Activated CD8-positive, alpha-beta T cell treated with anti-CD3 and anti-CD28 coated beads for 36 hours (primary cell): ENCODE measurements at regions of chr2 and their contacts with region 1.

Region 1: DNA sequence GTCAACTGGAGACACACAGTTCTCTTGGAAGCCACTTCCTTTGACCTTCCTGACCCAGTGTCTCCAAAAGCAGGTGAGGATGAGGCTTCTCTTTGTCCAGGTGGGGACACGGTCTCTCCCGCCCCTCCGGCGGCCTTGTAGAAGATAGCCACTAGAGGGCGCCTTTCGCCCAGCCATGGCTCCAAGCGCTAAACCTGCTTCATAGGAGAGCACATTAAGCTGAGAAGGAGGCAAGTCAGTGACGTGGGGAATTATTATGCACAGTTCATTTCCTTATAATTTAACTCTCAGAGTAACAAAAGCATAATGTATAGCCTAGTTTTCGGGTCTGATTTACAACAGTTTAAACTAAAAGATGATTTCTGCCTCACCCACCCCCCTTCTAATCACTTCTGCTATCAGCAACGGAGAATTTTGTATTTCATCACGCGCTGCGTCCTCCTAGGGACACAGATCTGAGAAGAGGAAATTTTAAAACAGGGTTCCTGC is 208.7 kb downstream of the ICOS start:
- DNase-seq: peak; percentile 88
- ATAC-seq: peak; percentile 98
- H3K4me3 Mint-ChIP-seq: peak overlapping the region; percentile 70
- H3K27ac Mint-ChIP-seq: peak overlapping the region; percentile 58
- H3K4me1 Mint-ChIP-seq: peaks cover 5% of the 10 kb centered on the region
- H3K27me3 Mint-ChIP-seq: peaks cover 26% of the 10 kb centered on the region
- CTCF ChIP-seq: peak; percentile 90

Region 2: DNA sequence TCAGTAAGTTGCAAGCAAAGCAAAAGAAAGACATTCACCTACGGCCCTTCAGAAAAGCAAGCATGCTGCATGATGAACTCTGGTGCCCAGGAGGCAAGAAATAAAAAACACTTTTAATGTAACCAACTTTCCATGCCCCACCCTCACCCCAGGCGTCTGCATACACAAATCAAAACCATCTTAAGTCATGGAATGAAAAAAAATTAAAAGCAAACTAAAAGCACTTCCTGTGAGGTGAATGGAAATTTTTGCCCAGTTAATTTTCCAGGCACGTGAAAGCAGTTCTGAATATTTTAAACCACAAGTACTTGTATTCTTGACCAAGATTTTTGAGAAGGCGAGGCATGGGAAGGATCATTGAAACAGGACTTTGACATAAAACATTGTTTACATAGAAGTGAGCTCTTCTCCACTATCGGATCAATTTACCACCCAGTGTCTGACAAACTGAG is 211.2 kb before region 1 on chr2:
- CTCF ChIA-PET with region 1: no interaction called
- POLR2A ChIA-PET with region 1: no interaction called
- intact Hi-C with region 1: no loop called
- DNase-seq: peak; percentile 81
- ATAC-seq: peak; percentile 50
- H3K4me3 Mint-ChIP-seq: peak overlapping the region; percentile 60
- H3K27ac Mint-ChIP-seq: peak overlapping the region; percentile 95
- H3K4me1 Mint-ChIP-seq: peaks cover 58% of the 10 kb centered on the region
- H3K27me3 Mint-ChIP-seq: no peaks in the 10 kb centered on the region
- CTCF ChIP-seq: no peak

Region 3: GRCh38 chr2:204078003-204078698 is 67.2 kb before region 1 on chr2:
- CTCF ChIA-PET with region 1: interaction called, 25 read pairs
- POLR2A ChIA-PET with region 1: no interaction called
- intact Hi-C with region 1: no loop called
- DNase-seq: no peak
- ATAC-seq: no peak
- H3K4me3 Mint-ChIP-seq: no peak overlapping the region
- H3K27ac Mint-ChIP-seq: no peak overlapping the region
- H3K4me1 Mint-ChIP-seq: peaks cover 2% of the 10 kb centered on the region
- H3K27me3 Mint-ChIP-seq: peaks cover 5% of the 10 kb centered on the region
- CTCF ChIP-seq: no peak

Region 4: DNA sequence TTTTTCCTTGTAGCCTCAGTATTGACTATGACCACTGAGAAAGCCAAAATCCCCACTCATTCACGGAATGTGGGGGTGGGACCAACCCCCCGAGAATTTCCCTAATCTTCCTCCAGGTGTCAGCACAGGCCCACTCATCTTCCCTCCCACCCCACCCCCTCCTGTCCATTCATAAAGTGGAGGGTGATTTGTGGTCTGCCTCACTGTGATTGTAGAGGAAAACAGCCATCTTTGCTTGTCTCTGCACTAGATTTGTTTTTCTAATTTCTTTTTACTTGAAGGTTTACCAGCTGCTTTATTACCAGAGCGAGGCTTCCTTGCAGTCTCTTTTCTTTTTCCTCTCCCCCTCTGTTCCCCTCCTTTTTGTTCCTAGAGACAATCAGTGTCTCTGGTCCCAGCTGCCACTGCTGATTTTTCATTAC is 37.0 kb before region 1 on chr2:
- CTCF ChIA-PET with region 1: interaction called, 9 read pairs
- POLR2A ChIA-PET with region 1: interaction called, 3 read pairs
- intact Hi-C with region 1: loop called (anchors 5 kb)
- DNase-seq: peak; percentile 73
- ATAC-seq: peak; percentile 49
- H3K4me3 Mint-ChIP-seq: peak overlapping the region; percentile 62
- H3K27ac Mint-ChIP-seq: peak overlapping the region; percentile 92
- H3K4me1 Mint-ChIP-seq: peaks cover 78% of the 10 kb centered on the region
- H3K27me3 Mint-ChIP-seq: peaks cover 4% of the 10 kb centered on the region
- CTCF ChIP-seq: peak; percentile 89

Region 5: DNA sequence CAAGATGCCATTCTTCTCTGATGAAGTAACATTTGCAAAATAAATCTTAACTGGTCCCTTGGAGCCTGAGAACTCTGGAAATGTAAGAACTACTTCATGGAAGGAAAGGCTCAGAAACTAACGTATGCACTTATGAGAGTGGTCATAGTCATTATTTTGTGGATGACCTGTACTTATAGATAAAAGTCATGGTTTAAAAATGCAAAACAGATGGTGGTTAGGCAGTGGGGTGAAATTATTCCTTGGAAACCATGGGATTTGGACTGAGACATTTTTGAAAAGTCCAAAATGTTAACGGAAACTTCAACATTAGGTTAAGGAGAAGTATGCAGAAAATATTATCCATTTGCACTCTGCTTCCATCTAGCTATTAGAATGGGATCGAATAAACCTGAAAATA is 14.2 kb after region 1 on chr2:
- CTCF ChIA-PET with region 1: interaction called, 10 read pairs
- POLR2A ChIA-PET with region 1: no interaction called
- intact Hi-C with region 1: no loop called
- DNase-seq: no peak
- ATAC-seq: no peak
- H3K4me3 Mint-ChIP-seq: no peak overlapping the region
- H3K27ac Mint-ChIP-seq: no peak overlapping the region
- H3K4me1 Mint-ChIP-seq: no peaks in the 10 kb centered on the region
- H3K27me3 Mint-ChIP-seq: peaks cover 4% of the 10 kb centered on the region
- CTCF ChIP-seq: no peak

Region 6: GRCh38 chr2:204166961-204167360 is 21.7 kb after region 1 on chr2:
- CTCF ChIA-PET with region 1: interaction called, 12 read pairs
- POLR2A ChIA-PET with region 1: interaction called, 3 read pairs
- intact Hi-C with region 1: no loop called
- DNase-seq: no peak
- ATAC-seq: no peak
- H3K4me3 Mint-ChIP-seq: no peak overlapping the region
- H3K27ac Mint-ChIP-seq: no peak overlapping the region
- H3K4me1 Mint-ChIP-seq: no peaks in the 10 kb centered on the region
- H3K27me3 Mint-ChIP-seq: no peaks in the 10 kb centered on the region
- CTCF ChIP-seq: no peak

Region 7: DNA sequence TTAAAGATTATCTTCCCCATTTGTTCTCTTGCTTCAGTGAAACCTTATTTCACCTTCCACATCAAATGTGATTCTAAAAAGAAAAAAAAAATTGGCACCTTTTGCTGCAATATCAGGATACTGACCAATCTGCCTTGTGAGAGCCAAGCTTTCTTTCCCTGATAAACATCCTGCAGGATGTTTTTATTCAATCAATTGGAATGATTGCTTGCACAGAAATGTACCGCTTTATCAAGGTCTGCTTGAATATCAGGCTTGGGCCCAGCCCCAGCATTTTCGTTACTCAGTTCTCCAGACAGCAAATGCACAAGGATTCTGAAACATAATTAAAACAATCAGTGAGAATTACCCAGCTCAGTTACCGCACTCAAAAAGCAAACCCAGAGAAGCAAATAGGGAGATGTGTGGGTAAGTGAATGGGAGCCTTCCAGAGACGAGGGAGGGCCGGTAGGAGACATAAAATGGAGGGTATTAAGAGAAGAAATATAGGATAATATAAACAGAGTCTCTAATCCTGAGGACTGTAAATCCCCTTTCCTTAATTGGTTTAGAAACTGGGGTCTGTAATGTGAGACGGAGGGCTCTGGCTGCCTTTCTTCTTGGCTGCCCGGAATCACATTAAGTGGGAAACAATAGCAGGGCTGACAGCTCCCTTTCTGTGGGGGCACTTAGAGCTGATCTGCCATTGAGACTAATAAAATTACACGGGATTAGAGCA is 83.0 kb after region 1 on chr2:
- CTCF ChIA-PET with region 1: no interaction called
- POLR2A ChIA-PET with region 1: no interaction called
- intact Hi-C with region 1: no loop called
- DNase-seq: no peak
- ATAC-seq: no peak
- H3K4me3 Mint-ChIP-seq: no peak overlapping the region
- H3K27ac Mint-ChIP-seq: no peak overlapping the region
- H3K4me1 Mint-ChIP-seq: no peaks in the 10 kb centered on the region
- H3K27me3 Mint-ChIP-seq: peaks cover 11% of the 10 kb centered on the region
- CTCF ChIP-seq: no peak

Region 8: GRCh38 chr2:204260162-204260877 is 115.0 kb after region 1 on chr2:
- CTCF ChIA-PET with region 1: interaction called, 11 read pairs
- POLR2A ChIA-PET with region 1: no interaction called
- intact Hi-C with region 1: no loop called
- DNase-seq: peak; percentile 73
- ATAC-seq: peak; percentile 24
- H3K4me3 Mint-ChIP-seq: no peak overlapping the region
- H3K27ac Mint-ChIP-seq: no peak overlapping the region
- H3K4me1 Mint-ChIP-seq: no peaks in the 10 kb centered on the region
- H3K27me3 Mint-ChIP-seq: peaks cover 26% of the 10 kb centered on the region
- CTCF ChIP-seq: peak; percentile 72

Region 9: DNA sequence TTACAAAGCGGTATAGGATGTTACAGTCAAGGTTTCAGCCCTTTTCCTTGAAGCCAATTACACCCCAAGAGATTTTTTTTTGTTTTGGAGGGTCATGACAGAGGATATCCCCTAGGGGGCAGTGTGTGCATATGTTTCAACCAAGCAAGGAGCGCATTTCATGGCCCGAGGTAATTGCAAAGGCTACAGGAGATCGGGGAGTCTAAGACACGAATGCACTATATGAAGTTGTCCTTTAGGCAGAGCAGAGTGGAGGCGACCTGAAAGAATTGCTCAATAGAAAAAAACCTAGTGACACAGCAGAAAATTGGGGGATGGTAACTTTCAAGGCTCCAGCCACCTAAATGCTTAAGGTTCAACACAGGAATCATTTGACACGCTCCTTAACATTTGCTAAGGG is 180.2 kb after region 1 on chr2:
- CTCF ChIA-PET with region 1: interaction called, 5 read pairs
- POLR2A ChIA-PET with region 1: no interaction called
- intact Hi-C with region 1: loop called (anchors 10 kb)
- DNase-seq: peak; percentile 64
- ATAC-seq: peak; percentile 77
- H3K4me3 Mint-ChIP-seq: no peak overlapping the region
- H3K27ac Mint-ChIP-seq: no peak overlapping the region
- H3K4me1 Mint-ChIP-seq: peaks cover 2% of the 10 kb centered on the region
- H3K27me3 Mint-ChIP-seq: peaks cover 7% of the 10 kb centered on the region
- CTCF ChIP-seq: peak; percentile 90